ENCODE measurements at regions of chr7 and their contacts with region 1.

Region 1: DNA sequence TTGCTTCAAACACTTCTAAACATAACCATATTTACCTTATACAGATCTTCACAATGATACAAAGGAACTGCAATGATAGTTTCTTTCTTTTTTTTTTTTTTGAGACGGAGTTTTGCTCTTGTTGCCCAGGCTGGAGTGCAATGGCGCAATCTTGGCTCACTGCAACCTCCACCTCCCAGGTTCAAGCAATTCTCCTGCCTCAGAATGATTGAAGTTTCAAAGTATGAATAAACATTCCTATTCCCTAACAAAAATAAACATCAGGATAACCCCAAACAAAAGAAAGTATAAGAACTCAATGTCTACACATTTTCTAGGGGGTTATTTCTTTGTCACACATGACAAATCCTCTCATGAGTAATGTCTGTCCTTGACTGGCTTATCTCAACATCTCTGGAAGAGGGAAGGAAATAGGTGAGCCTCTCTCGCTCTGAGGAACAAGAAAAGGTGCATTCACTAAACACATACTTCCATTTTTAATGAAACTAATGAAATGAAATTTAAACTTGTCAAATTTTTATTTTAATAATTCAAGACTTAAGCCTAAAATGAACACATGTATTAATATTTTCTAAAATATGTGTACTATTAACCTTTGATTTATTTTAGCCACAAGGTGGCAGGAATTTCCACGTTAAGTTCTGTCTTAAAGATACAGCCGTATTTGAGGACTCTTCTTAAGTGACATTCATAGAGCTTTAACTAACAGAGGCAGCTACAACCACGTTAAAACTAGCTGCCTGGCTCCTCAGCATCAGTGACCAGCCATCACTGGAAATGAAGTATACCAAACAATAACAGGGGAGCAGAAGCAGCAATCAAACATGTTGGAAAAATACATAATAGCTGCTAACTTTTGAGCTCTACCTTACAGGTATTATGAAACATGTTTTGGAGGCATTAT is 58.3 kb downstream of the MALSU1 start:
- DNase-seq: no peak
- ATAC-seq: no peak
- H3K4me3 ChIP-seq: no peak overlapping the region
- H3K27ac ChIP-seq: no peak overlapping the region
- H3K4me1 ChIP-seq: no peaks in the 10 kb centered on the region
- H3K27me3 ChIP-seq: no peaks in the 10 kb centered on the region
- CTCF ChIP-seq: peak; percentile 14

Region 2: DNA sequence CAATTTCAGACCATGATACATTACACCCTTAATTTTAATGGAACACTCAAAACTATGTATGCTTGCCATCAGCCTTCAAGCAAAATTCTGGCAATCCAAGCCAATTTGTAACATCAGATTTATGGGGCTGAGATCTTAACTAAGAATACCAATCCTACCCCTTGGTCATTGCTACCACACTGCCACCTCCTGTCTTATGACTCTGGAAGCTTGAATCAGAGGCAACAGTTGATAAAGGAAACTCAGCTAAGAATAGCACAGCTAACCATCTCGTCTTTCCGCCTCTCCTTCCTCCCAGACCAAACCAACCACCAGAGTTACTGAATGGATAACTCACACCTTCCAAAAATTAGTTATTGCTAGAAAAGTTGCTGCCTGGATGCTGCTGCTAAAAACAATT is 105.4 kb after region 1 on chr7:
- intact Hi-C with region 1: loop called in 1 of 2 experiments (anchors 5 kb)
- DNase-seq: no peak
- ATAC-seq: peak; percentile 76 to 98 (median 98)
- H3K4me3 ChIP-seq: no peak overlapping the region
- H3K27ac ChIP-seq: no peak overlapping the region
- H3K4me1 ChIP-seq: peaks cover 4% of the 10 kb centered on the region
- H3K27me3 ChIP-seq: peaks cover 0 to 70% (median 7%) of the 10 kb centered on the region in 3 donors
- CTCF ChIP-seq: peak; percentile 44

Region 3: DNA sequence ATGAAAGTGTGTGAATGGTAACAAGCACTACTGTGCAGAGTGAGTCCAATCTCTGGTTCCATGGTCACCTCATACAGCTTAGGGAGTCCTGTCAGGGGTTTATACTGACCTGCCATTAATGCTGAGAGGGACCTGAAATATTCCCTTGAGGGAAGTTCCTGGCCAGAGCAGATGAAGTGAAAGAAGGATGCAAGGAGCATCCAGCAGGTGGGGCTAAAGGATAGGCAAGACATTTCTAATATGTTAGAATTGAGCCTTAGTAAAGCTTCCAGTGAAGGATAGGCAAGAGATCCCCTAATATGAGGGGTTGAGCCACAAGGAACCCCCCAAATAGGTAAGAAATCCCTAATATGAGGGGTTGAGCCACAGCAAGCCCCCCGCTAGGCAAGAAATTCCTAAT is 297.1 kb after region 1 on chr7:
- intact Hi-C with region 1: no loop called
- DNase-seq: no peak
- ATAC-seq: peak in 1 of 4 donors; percentile 38
- H3K4me3 ChIP-seq: no peak overlapping the region
- H3K27ac ChIP-seq: no peak overlapping the region
- H3K4me1 ChIP-seq: no peaks in the 10 kb centered on the region
- H3K27me3 ChIP-seq: no peaks in the 10 kb centered on the region
- CTCF ChIP-seq: peak; percentile 22